ENCODE measurements at regions of chr3 and their contacts with region 1.

Region 1: GRCh38 chr3:47164007-47164881 is at the start of gene SETD2:
- DNase-seq: peak; percentile 71 to 92 (median 83)
- ATAC-seq: peak; percentile 82
- H3K4me3 ChIP-seq: peak within 1 kb of the TSS; percentile 93
- H3K4me3 Mint-ChIP-seq: peak within 1 kb of the TSS; percentile 99
- H3K27ac ChIP-seq: peak within 1 kb of the TSS; percentile 84 to 89
- H3K27ac Mint-ChIP-seq: peak within 1 kb of the TSS; percentile 96
- H3K4me1 ChIP-seq: peaks cover 44% of the 10 kb centered on the region
- H3K4me1 Mint-ChIP-seq: peaks cover 54% of the 10 kb centered on the region
- H3K27me3 ChIP-seq: no peaks in the 10 kb centered on the region
- H3K27me3 Mint-ChIP-seq: no peaks in the 10 kb centered on the region
- CTCF ChIP-seq: peak; percentile 37
- total RNA-seq, gene SETD2: 87.3 to 87.4 TPM

Region 2: DNA sequence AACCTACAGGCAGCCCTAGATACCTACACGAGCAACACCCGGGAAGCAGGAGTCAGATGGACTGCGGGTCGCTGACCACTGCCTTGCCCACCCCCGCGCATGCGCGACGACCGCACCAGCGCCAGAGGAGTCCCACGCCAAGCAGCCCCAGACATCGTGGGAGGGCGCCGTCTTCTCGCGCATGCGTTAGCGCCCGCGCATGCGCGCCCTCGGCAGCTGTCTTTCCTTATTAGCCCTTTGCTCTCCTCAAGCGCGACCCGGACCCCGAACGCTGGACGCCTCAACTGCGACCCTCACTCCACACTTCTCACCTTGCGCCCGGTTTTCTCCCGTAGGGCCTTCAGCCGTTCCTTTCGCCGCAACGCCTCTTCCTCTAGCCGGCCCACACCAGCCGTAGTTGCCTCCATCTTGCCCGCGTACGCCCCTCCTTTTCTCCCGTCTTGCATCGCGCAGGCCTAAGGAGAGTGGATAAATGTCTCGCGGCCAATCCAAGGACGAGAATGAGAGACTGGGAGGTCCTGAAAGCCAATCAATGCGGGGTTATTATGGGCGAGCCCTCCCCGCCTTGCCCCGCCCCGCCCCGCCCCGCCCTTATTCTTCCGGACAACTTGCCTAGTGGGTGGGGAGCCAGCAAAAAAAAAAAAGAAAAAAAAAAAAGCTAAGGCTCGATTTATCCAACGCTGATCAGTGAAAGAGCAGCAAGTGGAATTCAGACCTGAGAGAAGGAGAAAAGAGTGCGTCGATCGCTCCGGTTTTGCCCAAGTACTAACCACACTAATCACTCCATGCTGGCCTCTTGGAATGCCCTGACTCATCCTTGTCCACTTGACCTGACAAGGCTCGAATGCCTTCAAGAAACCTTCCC is 187.7 kb before region 1 on chr3 and contains the start of gene CCDC12:
- CTCF ChIA-PET with region 1: no interaction called
- POLR2A ChIA-PET with region 1: interaction called, 5 read pairs
- intact Hi-C with region 1: loop called in 1 of 2 experiments (anchors 1 kb)
- DNase-seq: peak; percentile 85 to 98 (median 89)
- ATAC-seq: peak; percentile 78
- H3K4me3 ChIP-seq: peak within 1 kb of the TSS; percentile 88
- H3K4me3 Mint-ChIP-seq: peak within 1 kb of the TSS; percentile 97
- H3K27ac ChIP-seq: peak within 1 kb of the TSS; percentile 84 to 95
- H3K27ac Mint-ChIP-seq: peak within 1 kb of the TSS; percentile 91
- H3K4me1 ChIP-seq: peaks cover 83% of the 10 kb centered on the region
- H3K4me1 Mint-ChIP-seq: peaks cover 74% of the 10 kb centered on the region
- H3K27me3 ChIP-seq: no peaks in the 10 kb centered on the region
- H3K27me3 Mint-ChIP-seq: no peaks in the 10 kb centered on the region
- CTCF ChIP-seq: no peak
- total RNA-seq, gene CCDC12: 57.5 to 59.5 TPM

Region 3: GRCh38 chr3:47113669-47114365 is 50.4 kb before region 1 on chr3:
- CTCF ChIA-PET with region 1: interaction called, 6 read pairs
- POLR2A ChIA-PET with region 1: interaction called, 5 read pairs
- intact Hi-C with region 1: loop called in 1 of 2 experiments (anchors 5 kb)
- DNase-seq: no peak
- ATAC-seq: no peak
- H3K4me3 ChIP-seq: no peak overlapping the region
- H3K4me3 Mint-ChIP-seq: no peak overlapping the region
- H3K27ac ChIP-seq: no peak overlapping the region
- H3K27ac Mint-ChIP-seq: no peak overlapping the region
- H3K4me1 ChIP-seq: no peaks in the 10 kb centered on the region
- H3K4me1 Mint-ChIP-seq: peaks cover 19% of the 10 kb centered on the region
- H3K27me3 ChIP-seq: no peaks in the 10 kb centered on the region
- H3K27me3 Mint-ChIP-seq: no peaks in the 10 kb centered on the region
- CTCF ChIP-seq: no peak

Region 4: GRCh38 chr3:47145272-47145671 is 19.0 kb before region 1 on chr3:
- CTCF ChIA-PET with region 1: interaction called, 8 read pairs
- POLR2A ChIA-PET with region 1: interaction called, 23 read pairs
- intact Hi-C with region 1: loop called in 1 of 2 experiments (anchors 1 kb)
- DNase-seq: no peak
- ATAC-seq: no peak
- H3K4me3 ChIP-seq: no peak overlapping the region
- H3K4me3 Mint-ChIP-seq: no peak overlapping the region
- H3K27ac ChIP-seq: no peak overlapping the region
- H3K27ac Mint-ChIP-seq: peak overlapping the region; percentile 48
- H3K4me1 ChIP-seq: peaks cover 42% of the 10 kb centered on the region
- H3K4me1 Mint-ChIP-seq: peaks cover 62% of the 10 kb centered on the region
- H3K27me3 ChIP-seq: no peaks in the 10 kb centered on the region
- H3K27me3 Mint-ChIP-seq: no peaks in the 10 kb centered on the region
- CTCF ChIP-seq: no peak

Region 5: GRCh38 chr3:47282424-47283192 is 118.4 kb after region 1 on chr3 and contains the starts of genes KIF9 and KLHL18:
- CTCF ChIA-PET with region 1: interaction called, 12 read pairs
- POLR2A ChIA-PET with region 1: interaction called, 15 read pairs
- intact Hi-C with region 1: loop called (anchors 1 to 2 kb)
- DNase-seq: peak; percentile 92 to 99 (median 95)
- ATAC-seq: peak; percentile 83
- H3K4me3 ChIP-seq: peak within 1 kb of the TSS; percentile 78
- H3K4me3 Mint-ChIP-seq: peak within 1 kb of the TSS; percentile 98
- H3K27ac ChIP-seq: peak within 1 kb of the TSS; percentile 95 to 98
- H3K27ac Mint-ChIP-seq: peak within 1 kb of the TSS; percentile 99
- H3K4me1 ChIP-seq: peaks cover 45% of the 10 kb centered on the region
- H3K4me1 Mint-ChIP-seq: peaks cover 42% of the 10 kb centered on the region
- H3K27me3 ChIP-seq: no peaks in the 10 kb centered on the region
- H3K27me3 Mint-ChIP-seq: no peaks in the 10 kb centered on the region
- CTCF ChIP-seq: no peak
- total RNA-seq, gene KIF9: 8.0 to 9.2 TPM
- total RNA-seq, gene KLHL18: 43.3 to 43.7 TPM

Region 6: DNA sequence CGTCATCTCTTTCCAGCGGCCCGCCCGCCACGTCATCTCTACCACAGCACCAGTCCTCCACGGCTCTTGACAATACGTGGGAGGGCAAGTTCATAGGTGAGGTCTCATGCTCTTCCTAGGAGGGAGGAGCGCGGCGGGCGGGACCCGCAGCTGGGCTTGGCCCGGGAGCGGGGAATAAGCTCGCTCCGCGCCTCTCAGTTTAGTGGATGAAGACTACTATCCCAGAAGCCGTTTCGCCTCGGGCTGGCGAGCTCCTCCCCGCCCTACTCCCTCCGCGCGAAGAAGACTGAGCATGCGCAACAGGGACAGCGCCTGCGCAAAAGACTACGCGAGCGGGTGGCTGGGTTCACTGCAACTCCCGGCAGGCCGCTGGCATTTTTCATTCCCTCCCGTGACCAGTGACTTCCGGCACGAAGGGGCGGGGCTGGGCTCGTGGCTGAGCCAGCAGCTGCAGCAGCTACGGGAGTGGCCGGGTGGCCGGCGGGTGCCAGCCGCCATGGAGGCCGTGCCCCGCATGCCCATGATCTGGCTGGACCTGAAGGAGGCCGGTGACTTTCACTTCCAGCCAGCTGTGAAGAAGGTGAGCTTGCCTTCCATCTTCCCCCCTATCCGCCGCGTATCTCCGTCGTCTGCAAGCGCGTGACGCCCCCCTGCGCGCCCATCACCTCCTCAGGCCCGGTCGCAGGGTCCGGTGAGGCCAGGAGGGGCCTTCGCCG is 216.5 kb after region 1 on chr3 and contains the start of gene PTPN23:
- CTCF ChIA-PET with region 1: interaction called, 10 read pairs
- POLR2A ChIA-PET with region 1: interaction called, 22 read pairs
- intact Hi-C with region 1: loop called in 1 of 2 experiments (anchors 2 kb)
- DNase-seq: peak; percentile 97 to 99 (median 99)
- ATAC-seq: peak; percentile 84
- H3K4me3 ChIP-seq: peak within 1 kb of the TSS; percentile 97
- H3K4me3 Mint-ChIP-seq: peak within 1 kb of the TSS; percentile 95
- H3K27ac ChIP-seq: peak within 1 kb of the TSS; percentile 85 to 97
- H3K27ac Mint-ChIP-seq: peak within 1 kb of the TSS; percentile 91
- H3K4me1 ChIP-seq: peaks cover 28% of the 10 kb centered on the region
- H3K4me1 Mint-ChIP-seq: peaks cover 41% of the 10 kb centered on the region
- H3K27me3 ChIP-seq: no peaks in the 10 kb centered on the region
- H3K27me3 Mint-ChIP-seq: no peaks in the 10 kb centered on the region
- CTCF ChIP-seq: no peak
- total RNA-seq, gene PTPN23: 27.3 to 35.7 TPM

Region 7: DNA sequence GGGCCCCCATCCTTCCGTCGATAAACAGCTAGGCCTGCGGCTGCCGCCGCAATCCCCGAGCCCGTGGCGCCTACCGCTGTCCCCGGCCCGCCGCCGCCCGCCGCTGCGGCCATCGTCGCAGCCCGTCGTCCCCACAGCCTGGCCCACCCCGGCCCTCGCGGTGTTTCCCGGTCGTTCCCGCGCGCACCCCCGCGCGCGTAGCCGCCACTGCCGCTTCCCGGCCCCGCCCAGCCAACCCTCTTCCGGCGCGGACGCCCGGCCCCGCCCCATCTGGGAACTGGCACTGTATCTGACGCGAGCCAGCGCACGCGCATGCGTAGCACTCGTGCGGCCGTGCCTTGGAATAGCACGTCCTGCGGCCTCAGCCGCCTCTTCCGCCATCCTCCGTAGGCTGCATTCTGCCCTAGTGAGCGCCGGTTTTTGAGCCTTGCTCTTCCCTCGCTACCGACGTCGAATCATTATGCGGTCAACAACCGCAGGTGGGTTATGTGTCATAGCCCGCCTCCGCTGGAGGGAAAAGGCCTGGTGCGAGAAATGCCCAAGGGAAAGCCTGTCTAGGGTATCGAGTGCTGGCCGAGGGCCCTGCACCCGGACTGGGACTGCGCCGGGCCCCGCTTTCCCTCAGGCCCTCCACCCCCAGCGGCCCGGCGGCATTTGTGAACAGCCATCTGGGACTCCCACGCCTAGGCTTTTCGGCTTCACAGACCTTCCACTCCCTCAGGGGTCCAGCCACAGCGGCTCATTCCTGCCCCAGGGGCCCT is 617.6 kb after region 1 on chr3 and contains the start of gene SMARCC1:
- CTCF ChIA-PET with region 1: no interaction called
- POLR2A ChIA-PET with region 1: interaction called, 5 read pairs
- intact Hi-C with region 1: loop called in 1 of 2 experiments (anchors 10 kb)
- DNase-seq: peak; percentile 94 to 99 (median 97)
- ATAC-seq: peak; percentile 89
- H3K4me3 ChIP-seq: peak within 1 kb of the TSS; percentile 84
- H3K4me3 Mint-ChIP-seq: peak within 1 kb of the TSS; percentile 95
- H3K27ac ChIP-seq: peak within 1 kb of the TSS; percentile 96 to 97
- H3K27ac Mint-ChIP-seq: peak within 1 kb of the TSS; percentile 99
- H3K4me1 ChIP-seq: peaks cover 44% of the 10 kb centered on the region
- H3K4me1 Mint-ChIP-seq: peaks cover 31% of the 10 kb centered on the region
- H3K27me3 ChIP-seq: no peaks in the 10 kb centered on the region
- H3K27me3 Mint-ChIP-seq: no peaks in the 10 kb centered on the region
- CTCF ChIP-seq: no peak
- total RNA-seq, gene SMARCC1: 74.2 to 76.2 TPM

Measured in CD4-positive, alpha-beta T cell (primary cell).